RWPE1 (cell line): ENCODE measurements at regions of chr15 and their contacts with region 1.

Region 1: DNA sequence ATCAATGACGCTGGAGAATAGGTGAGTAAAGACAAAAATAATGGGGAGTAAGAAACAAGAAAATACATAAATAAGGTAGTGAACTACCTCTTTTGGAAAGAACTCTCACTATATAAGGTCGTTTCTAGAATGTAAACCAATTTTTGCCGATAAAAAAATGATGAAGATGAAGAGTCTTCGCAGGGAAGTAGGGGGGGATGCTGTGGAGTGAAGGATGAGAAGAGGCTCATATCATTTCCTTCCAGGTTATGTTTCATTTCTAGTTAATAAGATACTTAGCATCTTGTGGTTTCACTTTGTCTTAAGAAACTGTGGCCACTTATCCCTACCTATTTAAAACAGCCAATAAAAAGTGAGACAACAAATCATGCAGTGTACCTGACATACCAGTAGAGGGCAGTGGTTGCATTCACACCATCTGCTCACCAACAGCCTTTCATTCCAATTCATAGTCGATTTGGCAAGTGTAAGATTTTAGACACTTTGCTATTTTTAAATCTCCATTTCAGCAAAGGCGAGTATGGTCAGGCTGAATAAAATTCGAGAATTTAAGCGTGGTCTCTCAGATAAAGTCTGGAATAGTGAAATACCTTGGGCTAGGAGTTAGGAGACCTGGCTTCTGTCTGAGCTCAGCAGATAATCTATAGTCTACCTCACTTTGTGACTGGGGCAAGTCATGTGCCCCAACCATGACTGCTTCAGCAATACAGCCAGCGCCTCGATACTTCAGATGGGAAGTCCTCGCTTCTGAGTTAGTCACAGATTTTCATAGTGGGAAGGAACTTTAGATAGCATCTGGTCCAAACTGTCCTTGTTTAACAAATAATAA is 28.9 kb upstream of the ICE2 start:
- DNase-seq: peak; percentile 66
- H3K27ac ChIP-seq: no peak overlapping the region
- CTCF ChIP-seq: peak; percentile 98

Region 2: DNA sequence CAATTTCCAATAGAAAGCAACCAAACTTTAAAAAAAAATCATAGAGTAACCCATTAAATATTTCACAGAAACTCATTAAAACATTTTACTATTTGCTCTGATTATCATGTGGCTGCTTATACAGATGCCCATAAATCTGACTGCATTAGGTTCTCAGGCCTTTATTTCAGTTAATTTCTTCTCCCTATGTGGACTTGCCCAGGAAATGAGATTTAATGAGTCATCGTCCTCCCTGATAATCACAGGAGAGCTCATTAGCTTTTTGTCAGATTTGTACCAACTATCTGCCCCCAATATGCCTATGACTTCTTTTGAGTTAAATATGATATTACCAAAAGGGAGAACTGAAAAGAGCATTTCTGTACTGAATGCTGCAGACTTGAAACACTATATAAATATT is 335.7 kb before region 1 on chr15:
- CTCF ChIA-PET with region 1: no interaction called
- POLR2A ChIA-PET with region 1: no interaction called
- DNase-seq: peak; percentile 13
- H3K27ac ChIP-seq: no peak overlapping the region
- CTCF ChIP-seq: no peak

Region 3: GRCh38 chr15:60520825-60521368 is 13.1 kb after region 1 on chr15:
- CTCF ChIA-PET with region 1: interaction called, 21 read pairs
- POLR2A ChIA-PET with region 1: no interaction called
- DNase-seq: peak; percentile 49
- H3K27ac ChIP-seq: no peak overlapping the region
- CTCF ChIP-seq: peak; percentile 99

Region 4: GRCh38 chr15:60932051-60932915 is 424.5 kb after region 1 on chr15:
- CTCF ChIA-PET with region 1: interaction called, 13 read pairs
- POLR2A ChIA-PET with region 1: no interaction called
- DNase-seq: peak; percentile 99
- H3K27ac ChIP-seq: peak overlapping the region; percentile 57
- CTCF ChIP-seq: peak; percentile 85